Aorta (tissue), 5 donors: ENCODE measurements at regions of chr21 and their contacts with region 1.

Region 1: DNA sequence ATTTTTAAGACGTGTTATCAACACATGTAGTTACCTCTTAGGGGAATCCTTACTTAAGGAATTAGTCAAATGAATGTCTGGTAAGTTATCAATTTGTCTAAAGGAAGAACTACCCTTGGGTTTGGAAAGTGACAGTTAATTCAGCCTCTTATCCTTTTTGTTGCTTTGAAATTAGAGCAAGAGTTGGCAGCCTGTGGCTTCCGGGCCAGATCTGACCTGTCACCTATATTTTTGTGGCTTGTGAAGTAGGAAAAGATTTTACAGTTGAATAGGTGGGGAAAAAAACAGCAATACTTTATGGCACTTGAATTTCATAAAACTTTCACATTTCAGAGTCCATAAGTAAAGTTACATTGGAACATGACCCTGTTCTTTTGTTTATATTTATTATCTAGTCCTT is 5.5 kb downstream of the MRPS6 start:
- DNase-seq: no peak
- ATAC-seq: no peak
- H3K4me3 ChIP-seq: no peak overlapping the region
- H3K27ac ChIP-seq: no peak overlapping the region
- H3K4me1 ChIP-seq: peaks cover 6 to 27% of the 10 kb centered on the region in 2 donors
- H3K27me3 ChIP-seq: no peaks in the 10 kb centered on the region

Region 2: DNA sequence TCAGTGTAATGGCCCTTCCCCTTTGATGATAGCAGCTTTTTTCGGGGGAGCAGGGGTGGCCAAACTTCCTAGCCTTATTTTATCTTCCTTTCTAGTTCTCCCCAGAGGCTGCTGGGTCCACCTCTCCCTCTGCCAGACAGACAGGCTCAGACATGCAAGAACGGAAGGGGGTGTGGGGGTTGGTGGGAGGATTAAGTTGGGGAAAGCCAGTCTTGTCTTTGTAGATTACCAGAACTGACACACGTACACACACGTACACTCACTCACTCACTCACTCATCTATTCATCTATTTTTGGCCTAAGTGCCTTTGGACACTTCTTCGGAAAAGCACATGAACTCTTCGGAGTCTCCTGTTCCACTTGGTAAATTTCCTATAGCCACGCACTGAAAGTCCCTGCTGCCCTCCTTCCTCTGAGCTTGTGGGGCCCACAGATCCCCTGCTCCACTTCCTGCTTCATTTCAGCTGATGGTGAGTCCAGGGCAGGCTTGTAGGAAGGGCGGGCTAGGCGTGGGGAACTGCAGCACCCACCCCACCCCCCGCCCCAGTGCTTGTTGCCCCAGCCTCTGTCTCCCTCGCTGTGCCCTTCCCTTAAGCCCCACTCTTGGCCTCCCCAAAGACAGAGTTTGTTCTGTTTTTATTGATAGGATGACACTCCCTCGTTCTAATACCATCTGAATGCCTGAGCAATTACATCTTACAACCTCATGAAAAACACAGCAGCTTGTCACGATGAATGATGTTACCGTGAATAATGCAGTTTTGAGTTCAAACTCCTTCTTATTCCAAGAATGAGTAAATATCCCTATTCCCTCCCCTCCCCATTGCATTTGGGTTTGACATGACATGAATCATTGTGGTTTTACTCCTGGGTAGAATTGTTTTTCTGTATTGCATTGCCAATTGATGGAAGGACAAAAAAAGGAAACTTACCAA is 102.6 kb before region 1 on chr21:
- intact Hi-C with region 1: no loop called
- DNase-seq: peak in 1 of 2 donors; percentile 73
- ATAC-seq: peak; percentile 81
- H3K4me3 ChIP-seq: no peak overlapping the region
- H3K27ac ChIP-seq: peak overlapping the region; percentile 49 to 52
- H3K4me1 ChIP-seq: peaks cover 0 to 14% of the 10 kb centered on the region in 2 donors
- H3K27me3 ChIP-seq: no peaks in the 10 kb centered on the region

Region 3: GRCh38 chr21:34191876-34192275 is 113.0 kb after region 1 on chr21:
- intact Hi-C with region 1: no loop called
- DNase-seq: no peak
- ATAC-seq: no peak
- H3K4me3 ChIP-seq: no peak overlapping the region
- H3K27ac ChIP-seq: no peak overlapping the region
- H3K4me1 ChIP-seq: no peaks in the 10 kb centered on the region
- H3K27me3 ChIP-seq: no peaks in the 10 kb centered on the region

Region 4: GRCh38 chr21:34202553-34203372 is 123.8 kb after region 1 on chr21:
- intact Hi-C with region 1: loop called (anchors 5 kb)
- DNase-seq: peak; percentile 72 to 84
- ATAC-seq: peak; percentile 60
- H3K4me3 ChIP-seq: no peak overlapping the region
- H3K27ac ChIP-seq: peak overlapping the region; percentile 77 to 79
- H3K4me1 ChIP-seq: no peaks in the 10 kb centered on the region
- H3K27me3 ChIP-seq: no peaks in the 10 kb centered on the region